GM13976 (cell line): ENCODE measurements at regions of chr7 and their contacts with region 1.

Region 1: GRCh38 chr7:4797858-4798705 is 22.7 kb downstream of the AP5Z1 start:
- DNase-seq: peak; percentile 86
- CTCF ChIP-seq: peak; percentile 98

Region 2: GRCh38 chr7:5083311-5083711 is 285.2 kb after region 1 on chr7:
- in situ Hi-C with region 1: loop called (anchors 10 kb)
- DNase-seq: no peak
- CTCF ChIP-seq: no peak

Region 3: GRCh38 chr7:5567790-5568189 is 769.7 kb after region 1 on chr7:
- in situ Hi-C with region 1: no loop called
- DNase-seq: peak; percentile 22
- CTCF ChIP-seq: no peak